SK-MEL-5 (cell line): ENCODE measurements at regions of chr21 and their contacts with region 1.

Region 1: GRCh38 chr21:17554679-17555465 is 42.0 kb downstream of the CXADR start:
- DNase-seq: peak; percentile 65

Region 2: GRCh38 chr21:17393413-17393812 is 161.5 kb before region 1 on chr21:
- in situ Hi-C with region 1: loop called (anchors 5 kb)
- DNase-seq: no peak

Region 3: GRCh38 chr21:17461014-17461413 is 93.9 kb before region 1 on chr21:
- in situ Hi-C with region 1: no loop called
- DNase-seq: peak; percentile 60

Region 4: GRCh38 chr21:17650292-17650691 is 95.4 kb after region 1 on chr21:
- in situ Hi-C with region 1: no loop called
- DNase-seq: no peak